H1 (cell line): ENCODE measurements at regions of chr11 and their contacts with region 1.

Region 1: GRCh38 chr11:9384535-9385303 is at the start of gene IPO7:
- DNase-seq: peak; percentile 75 to 85
- H3K4me3 ChIP-seq: peak within 1 kb of the TSS; percentile 82 to 97 (median 92)
- H3K27ac ChIP-seq: peak within 1 kb of the TSS; percentile 93
- H3K4me1 ChIP-seq: no peaks in the 10 kb centered on the region; a peak in 2 of 7 replicates
- H3K27me3 ChIP-seq: no peaks in the 10 kb centered on the region
- CTCF ChIP-seq: peak in 1 of 3 experiments; percentile 29; a peak in 1 of 4 replicates
- EP300 ChIP-seq: no peak
- POLR2A ChIP-seq: peak; percentile 96
- RAD21 ChIP-seq: peak in 1 of 2 experiments; percentile 8; a peak in 1 of 4 replicates
- total RNA-seq, gene IPO7: 244 and 259 TPM in 2 replicates

Region 2: GRCh38 chr11:9180784-9181183 is 203.9 kb before region 1 on chr11:
- CTCF ChIA-PET with region 1: no interaction called
- POLR2A ChIA-PET with region 1: no interaction called
- DNase-seq: no peak
- H3K4me3 ChIP-seq: no peak overlapping the region
- H3K27ac ChIP-seq: no peak overlapping the region
- H3K4me1 ChIP-seq: no peaks in the 10 kb centered on the region
- H3K27me3 ChIP-seq: no peaks in the 10 kb centered on the region
- CTCF ChIP-seq: no peak
- EP300 ChIP-seq: no peak
- POLR2A ChIP-seq: no peak
- RAD21 ChIP-seq: no peak

Region 3: DNA sequence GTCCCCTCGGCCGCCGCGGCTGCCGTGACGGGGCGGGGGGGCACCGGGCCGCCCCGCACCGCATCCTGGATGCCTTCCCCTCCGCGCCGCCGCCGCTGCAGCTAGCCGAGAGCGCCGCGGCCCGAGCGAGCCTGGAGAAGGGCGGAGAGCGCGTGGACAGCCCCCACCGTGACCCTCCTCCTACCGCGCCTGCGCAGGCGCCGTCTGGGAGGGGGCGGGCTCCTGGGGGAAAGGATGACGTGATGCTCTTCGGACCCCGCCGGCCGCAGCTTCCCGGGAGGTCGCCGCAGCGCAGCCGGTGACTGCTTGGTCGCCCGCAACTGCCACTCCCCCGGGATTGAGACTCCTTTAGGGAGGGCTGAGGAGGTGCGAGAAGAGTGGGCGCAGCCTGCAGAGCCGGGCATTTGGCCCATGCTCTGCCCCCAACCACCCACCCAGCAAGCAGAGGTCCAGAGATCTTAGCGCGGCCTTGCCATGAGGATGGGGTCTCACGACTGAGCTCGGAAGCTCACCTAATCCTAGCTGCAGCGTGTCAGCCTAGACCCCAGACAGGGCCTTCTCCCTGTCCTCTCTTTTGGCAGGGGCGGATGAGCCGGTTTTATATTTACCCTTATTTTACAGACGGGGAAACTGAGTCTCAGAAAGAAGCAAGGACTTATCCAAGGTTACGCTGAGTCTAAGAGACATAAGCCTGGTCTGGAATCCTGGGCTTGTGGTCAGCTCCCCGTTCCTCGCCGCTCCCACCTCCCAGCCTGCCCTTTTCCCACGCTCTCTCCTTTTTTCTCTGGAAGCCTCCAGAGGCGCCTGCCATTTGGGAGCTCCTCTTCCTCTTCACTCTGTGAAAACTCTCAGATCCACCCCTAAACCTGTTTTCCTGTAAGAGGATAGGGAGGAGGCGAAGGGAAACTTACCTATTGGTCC is 119.2 kb before region 1 on chr11 and contains the start of gene DENND5A:
- CTCF ChIA-PET with region 1: interaction called, 3 read pairs
- POLR2A ChIA-PET with region 1: interaction called, 21 read pairs
- DNase-seq: peak; percentile 61 to 82
- H3K4me3 ChIP-seq: peak within 1 kb of the TSS; percentile 79 to 96 (median 88)
- H3K27ac ChIP-seq: peak within 1 kb of the TSS; percentile 65; the same call in 1 of the 2 replicates
- H3K4me1 ChIP-seq: peaks cover 2 to 4% (median 3%) of the 10 kb centered on the region in 4 experiments; a peak in 3 of 7 replicates
- H3K27me3 ChIP-seq: no peaks in the 10 kb centered on the region
- CTCF ChIP-seq: no peak
- EP300 ChIP-seq: no peak
- POLR2A ChIP-seq: peak; percentile 71 to 87
- RAD21 ChIP-seq: no peak
- total RNA-seq, gene DENND5A: 65.7 and 69.2 TPM in 2 replicates

Region 4: GRCh38 chr11:9314291-9315036 is 70.3 kb before region 1 on chr11 and contains the start of gene TMEM41B:
- CTCF ChIA-PET with region 1: interaction called, 3 read pairs
- POLR2A ChIA-PET with region 1: interaction called, 15 read pairs
- DNase-seq: peak; percentile 97 to 100
- H3K4me3 ChIP-seq: peak within 1 kb of the TSS; percentile 87 to 94 (median 91)
- H3K27ac ChIP-seq: peak within 1 kb of the TSS; percentile 90
- H3K4me1 ChIP-seq: peaks cover 0 to 8% (median 4%) of the 10 kb centered on the region in 4 experiments; a peak in 5 of 7 replicates
- H3K27me3 ChIP-seq: no peaks in the 10 kb centered on the region
- CTCF ChIP-seq: no peak
- EP300 ChIP-seq: peak in 1 of 2 experiments; percentile 8; a peak in 1 of 3 replicates
- POLR2A ChIP-seq: peak; percentile 81 to 84
- RAD21 ChIP-seq: peak in 1 of 2 experiments; percentile 4; a peak in 1 of 4 replicates
- total RNA-seq, gene TMEM41B: 43.9 and 50.1 TPM in 2 replicates

Region 5: DNA sequence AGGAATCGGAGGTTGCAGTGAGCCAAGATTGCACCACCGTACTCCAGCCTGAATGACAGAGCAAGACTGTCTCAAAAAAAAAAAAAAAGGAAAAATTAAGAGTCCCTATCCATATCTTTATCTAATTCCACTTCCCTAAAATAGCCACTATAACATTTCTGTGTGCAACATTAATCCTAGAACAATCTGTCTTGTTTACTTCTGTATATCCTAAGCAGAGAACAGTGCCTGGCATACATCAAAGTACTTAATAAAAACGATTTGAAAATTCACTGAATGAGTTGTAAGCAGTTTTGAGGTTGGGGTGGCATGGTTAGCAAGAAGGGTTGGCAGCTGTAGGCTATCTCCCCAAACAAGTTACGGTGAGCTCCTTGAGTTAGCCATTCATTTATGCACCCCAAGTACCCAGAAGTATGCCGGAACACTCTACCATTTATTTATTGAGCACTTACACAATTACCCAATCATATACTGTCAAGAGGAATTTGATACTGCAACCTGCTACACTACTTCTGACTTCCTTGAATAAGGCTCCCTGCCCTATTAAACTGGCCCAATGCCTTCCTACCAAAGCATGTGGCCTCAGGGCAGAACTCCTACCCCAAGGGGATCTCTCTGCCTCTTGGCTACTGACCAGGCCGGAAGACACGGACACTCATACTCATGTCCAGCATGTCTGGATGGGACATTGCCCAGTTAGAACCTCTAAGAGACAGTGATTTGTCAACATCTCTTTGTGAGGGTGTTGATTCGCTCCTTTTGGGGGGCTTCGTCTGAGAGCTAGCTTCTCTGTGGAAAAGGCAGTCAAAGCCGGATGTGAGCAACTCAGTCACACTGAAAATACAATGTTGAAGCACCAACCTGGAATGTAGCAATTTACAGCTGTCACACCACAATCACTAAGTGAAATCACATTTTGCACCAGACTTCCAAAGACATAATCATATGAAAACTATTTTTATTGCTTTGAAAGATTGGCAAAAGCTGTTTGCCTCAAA is 54.0 kb before region 1 on chr11:
- CTCF ChIA-PET with region 1: no interaction called
- POLR2A ChIA-PET with region 1: interaction called, 15 read pairs
- DNase-seq: no peak
- H3K4me3 ChIP-seq: no peak overlapping the region
- H3K27ac ChIP-seq: no peak overlapping the region
- H3K4me1 ChIP-seq: no peaks in the 10 kb centered on the region
- H3K27me3 ChIP-seq: no peaks in the 10 kb centered on the region
- CTCF ChIP-seq: no peak
- EP300 ChIP-seq: no peak
- POLR2A ChIP-seq: no peak
- RAD21 ChIP-seq: no peak

Region 6: GRCh38 chr11:9363954-9364912 is 20.5 kb before region 1 on chr11:
- CTCF ChIA-PET with region 1: interaction called, 4 read pairs
- POLR2A ChIA-PET with region 1: interaction called, 72 read pairs
- DNase-seq: peak; percentile 88 to 89
- H3K4me3 ChIP-seq: peak overlapping the region; percentile 19 to 59 (median 45)
- H3K27ac ChIP-seq: peak overlapping the region; percentile 92
- H3K4me1 ChIP-seq: peaks cover 4 to 15% (median 10%) of the 10 kb centered on the region in 4 experiments
- H3K27me3 ChIP-seq: no peaks in the 10 kb centered on the region
- CTCF ChIP-seq: no peak
- EP300 ChIP-seq: peak in 1 of 2 experiments; percentile 19; a peak in 1 of 3 replicates
- POLR2A ChIP-seq: peak; percentile 55 to 80; a peak in 2 of 3 replicates
- RAD21 ChIP-seq: no peak

Region 7: GRCh38 chr11:9396752-9397151 is 12.0 kb after region 1 on chr11:
- CTCF ChIA-PET with region 1: interaction called, 13 read pairs
- POLR2A ChIA-PET with region 1: interaction called, 71 read pairs
- DNase-seq: no peak
- H3K4me3 ChIP-seq: no peak overlapping the region
- H3K27ac ChIP-seq: no peak overlapping the region
- H3K4me1 ChIP-seq: peaks cover 0 to 3% (median under 1%) of the 10 kb centered on the region in 4 experiments; a peak in 2 of 7 replicates
- H3K27me3 ChIP-seq: no peaks in the 10 kb centered on the region
- CTCF ChIP-seq: no peak
- EP300 ChIP-seq: no peak
- POLR2A ChIP-seq: no peak
- RAD21 ChIP-seq: no peak